ENCODE measurements at regions of chrX and their contacts with region 1.

Region 1: DNA sequence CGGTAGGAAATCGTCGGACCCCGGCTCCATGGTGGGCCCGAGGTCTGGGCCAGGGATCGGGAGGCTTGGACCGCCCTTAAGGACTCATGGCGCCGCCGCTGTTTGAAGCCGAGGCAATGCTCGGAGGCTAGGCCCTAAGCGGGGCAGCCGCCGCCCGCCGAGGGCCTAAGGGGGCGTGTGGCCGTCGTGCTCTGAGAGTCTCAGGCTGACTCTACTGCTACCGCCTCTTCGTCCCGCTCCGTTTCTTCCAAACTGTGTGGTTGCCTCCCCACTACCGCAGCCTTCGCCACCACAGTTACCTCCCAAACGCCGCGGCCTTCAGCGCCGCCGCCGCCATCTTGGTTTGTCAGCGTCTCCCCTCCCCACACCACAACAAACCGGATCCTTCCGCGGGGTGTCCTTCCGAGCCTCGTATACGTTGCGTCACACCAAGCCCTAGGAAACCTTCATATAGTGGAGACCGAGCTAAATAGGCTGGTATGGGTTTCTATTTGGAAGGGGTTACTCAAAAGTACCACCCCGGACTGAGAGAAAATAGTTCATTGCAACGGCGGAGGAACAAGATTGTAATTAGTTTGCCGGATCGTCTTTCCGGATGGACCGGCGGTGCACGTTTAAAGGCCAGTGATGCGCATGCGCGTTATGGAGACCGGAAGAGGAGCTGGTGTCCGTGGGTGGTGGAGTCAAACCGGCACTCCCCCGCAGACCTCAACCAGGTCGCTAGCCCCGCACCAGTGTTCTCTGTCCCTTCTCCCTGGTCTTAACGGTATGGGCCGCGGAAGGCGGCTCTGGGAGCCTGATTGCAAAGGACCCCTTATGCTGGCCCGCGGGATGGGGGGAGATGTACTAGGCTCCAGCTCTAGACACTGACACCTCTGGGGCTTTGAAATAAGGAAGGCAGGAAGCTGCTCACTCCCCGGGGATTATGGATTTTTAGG is at the start of gene KDM5C:
- DNase-seq: peak; percentile 79 to 84
- ATAC-seq: peak; percentile 74 to 78
- H3K4me3 ChIP-seq: peak within 1 kb of the TSS; percentile 71 to 98 (median 84)
- H3K27ac ChIP-seq: peak within 1 kb of the TSS; percentile 93 to 96 (median 95)
- H3K4me1 ChIP-seq: peaks cover 26 to 44% of the 10 kb centered on the region in 2 donors
- H3K27me3 ChIP-seq: no peaks in the 10 kb centered on the region
- CTCF ChIP-seq: peak in 1 of 5 experiments; percentile 20
- POLR2A ChIP-seq: peak; percentile 77 to 80
- total RNA-seq, gene KDM5C: 143 to 210 (median 147) TPM

Region 2: DNA sequence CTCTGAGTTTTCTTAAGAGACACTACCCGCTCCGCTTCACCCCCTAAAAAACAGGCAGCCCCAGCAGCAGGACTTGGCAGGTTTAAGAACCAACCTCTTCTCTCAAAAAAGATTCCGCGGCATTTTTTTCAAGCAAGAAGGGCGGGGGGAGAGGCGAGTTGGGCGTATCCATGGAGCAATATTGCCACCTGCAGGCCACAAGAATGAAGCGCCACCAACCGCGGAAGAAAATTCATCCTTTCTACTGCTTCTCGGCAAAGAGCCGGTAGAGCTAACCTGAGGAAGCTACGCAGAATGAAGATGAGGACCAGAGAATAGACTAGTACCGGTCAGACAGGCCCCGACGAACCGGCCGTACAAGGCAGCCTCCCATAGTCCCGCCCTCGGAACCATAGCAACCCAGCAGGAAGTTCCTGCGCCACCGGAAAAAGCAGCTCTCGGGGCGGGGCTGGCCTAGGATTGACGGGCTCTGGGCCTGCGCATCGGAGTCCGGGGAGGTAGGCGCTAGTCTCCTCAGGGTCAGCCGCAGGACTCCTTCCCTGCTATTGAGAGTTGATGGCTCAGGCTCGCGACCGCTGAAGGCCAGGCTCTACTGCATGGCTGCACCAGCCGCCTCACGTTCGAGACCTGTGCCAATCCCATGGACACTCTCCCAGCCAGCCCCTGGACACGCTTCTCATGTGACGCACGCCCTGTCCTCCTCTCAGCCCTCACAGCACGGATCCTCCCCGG is 963.5 kb before region 1 on chrX:
- in situ Hi-C with region 1: no loop called
- intact Hi-C with region 1: loop called (anchors 5 kb)
- DNase-seq: peak; percentile 83 to 87
- ATAC-seq: peak; percentile 98 to 99
- H3K4me3 ChIP-seq: peak overlapping the region; percentile 59 to 71 (median 66)
- H3K27ac ChIP-seq: peak overlapping the region; percentile 77 to 86 (median 86)
- H3K4me1 ChIP-seq: peaks cover 0 to 7% of the 10 kb centered on the region in 2 donors
- H3K27me3 ChIP-seq: peaks cover 0 to 7% (median 0%) of the 10 kb centered on the region in 3 donors
- CTCF ChIP-seq: peak; percentile 85 to 100 (median 97)
- POLR2A ChIP-seq: peak; percentile 27 to 32

Region 3: DNA sequence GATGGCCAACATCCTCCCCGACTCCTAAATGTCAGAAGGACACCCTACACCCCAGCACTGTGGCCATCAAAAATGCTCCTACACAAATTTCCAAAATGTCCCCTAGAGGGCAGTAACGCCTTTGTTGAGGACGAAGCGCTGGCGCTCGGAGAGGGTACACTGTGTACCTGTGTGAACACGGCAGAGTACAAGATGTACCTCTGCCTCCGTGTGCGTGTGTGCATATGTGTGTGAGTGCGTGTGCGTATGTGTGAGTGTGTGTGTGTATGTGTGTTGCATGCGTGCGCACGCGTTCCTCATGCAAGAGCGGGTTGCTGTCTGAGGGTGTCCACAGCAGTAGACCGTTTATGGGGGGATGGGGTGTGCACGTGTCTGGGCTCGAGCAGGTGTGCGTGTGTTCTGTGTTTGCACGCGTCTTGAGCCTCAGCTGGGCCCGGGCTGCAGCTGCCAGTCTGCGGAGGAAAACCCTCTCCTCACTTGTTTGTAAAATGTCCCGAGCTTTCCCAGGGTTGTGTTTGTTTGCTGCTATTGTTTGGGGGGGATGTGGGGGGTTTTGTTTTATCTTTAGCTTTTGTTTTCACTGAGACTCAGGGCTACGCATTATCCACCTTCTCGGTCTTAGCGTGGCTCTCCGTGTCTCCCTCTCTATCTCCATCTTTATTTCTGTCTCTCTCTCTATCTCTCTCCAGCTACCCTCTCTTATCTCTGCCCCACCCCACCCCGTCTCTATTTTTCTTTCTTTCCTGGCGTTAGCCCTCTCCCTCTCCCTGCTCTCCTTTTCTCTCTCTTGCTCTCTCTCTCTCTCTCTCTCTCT is 153.3 kb before region 1 on chrX:
- in situ Hi-C with region 1: loop called in 1 of 4 experiments (anchors 25 kb)
- intact Hi-C with region 1: loop called (anchors 2 kb)
- DNase-seq: peak; percentile 74 to 84
- ATAC-seq: peak; percentile 94 to 95
- H3K4me3 ChIP-seq: peak overlapping the region; percentile 32 to 44 (median 34)
- H3K27ac ChIP-seq: peak overlapping the region; percentile 82 to 86 (median 84)
- H3K4me1 ChIP-seq: peaks cover 0 to 10% of the 10 kb centered on the region in 2 donors
- H3K27me3 ChIP-seq: no peaks in the 10 kb centered on the region
- CTCF ChIP-seq: peak; percentile 65 to 81 (median 78)
- POLR2A ChIP-seq: peak; percentile 28 to 31

Region 4: DNA sequence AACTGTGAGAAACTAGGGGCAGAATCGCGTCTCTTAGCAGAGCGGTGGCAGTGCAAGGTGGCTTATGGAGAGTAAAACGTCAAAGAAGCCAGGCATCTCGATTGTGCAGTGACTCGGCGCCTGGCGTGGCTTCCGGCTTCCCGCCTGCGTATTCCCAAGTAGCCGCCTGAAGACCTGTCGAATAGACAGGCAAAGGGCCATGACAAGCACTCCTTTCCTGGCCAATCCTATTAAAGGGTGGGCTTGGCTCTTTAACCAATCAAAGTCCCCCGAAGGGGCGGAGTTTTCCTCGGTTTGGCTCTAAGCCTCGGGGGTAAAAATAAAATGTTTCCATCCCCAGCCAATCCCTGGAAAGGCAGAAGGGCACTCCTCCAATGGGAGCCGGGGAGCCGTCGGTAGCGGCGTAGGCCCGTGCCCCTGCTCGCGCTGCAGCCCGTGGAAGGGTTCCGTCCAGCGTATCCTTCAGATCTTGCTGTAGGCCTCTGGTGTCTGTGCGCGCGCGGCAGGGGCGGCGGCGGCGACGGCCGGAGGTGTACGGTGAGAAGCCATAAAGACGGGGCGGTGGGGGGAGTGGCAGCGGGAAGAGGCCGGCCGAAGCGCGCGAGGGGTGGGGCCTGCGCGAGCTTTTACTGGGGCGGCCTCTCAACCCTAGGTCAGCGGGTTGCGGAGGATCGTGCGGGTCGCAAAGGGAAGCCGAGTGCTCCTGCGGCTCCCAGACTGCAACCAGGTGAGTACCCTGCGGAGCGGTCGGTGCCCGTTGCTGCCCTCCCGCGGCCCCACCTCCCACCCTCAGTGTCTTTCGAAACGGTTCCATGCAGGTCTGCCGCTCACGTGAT is 131.2 kb before region 1 on chrX and contains the start of gene KANTR:
- in situ Hi-C with region 1: loop called in 2 of 4 experiments (anchors 10 to 25 kb)
- intact Hi-C with region 1: loop called (anchors 2 kb)
- DNase-seq: peak; percentile 82 to 91
- ATAC-seq: peak; percentile 94 to 96
- H3K4me3 ChIP-seq: peak within 1 kb of the TSS; percentile 63 to 76 (median 68)
- H3K27ac ChIP-seq: peak within 1 kb of the TSS; percentile 85 to 95 (median 92)
- H3K4me1 ChIP-seq: peaks cover 6 to 7% of the 10 kb centered on the region in 2 donors
- H3K27me3 ChIP-seq: no peaks in the 10 kb centered on the region
- CTCF ChIP-seq: no peak
- POLR2A ChIP-seq: peak; percentile 75 to 83
- total RNA-seq, gene KANTR: 3.0 to 13.0 (median 7.4) TPM

Region 5: GRCh38 chrX:53116101-53116500 is 109.0 kb before region 1 on chrX:
- in situ Hi-C with region 1: loop called in 1 of 4 experiments (anchors 25 kb)
- intact Hi-C with region 1: no loop called
- DNase-seq: peak in 1 of 2 donors; percentile 22
- ATAC-seq: peak; percentile 76 to 93
- H3K4me3 ChIP-seq: peak overlapping the region in 1 of 4 donors; percentile 29
- H3K27ac ChIP-seq: peak overlapping the region; percentile 57 to 80 (median 68)
- H3K4me1 ChIP-seq: peaks cover 0 to 6% of the 10 kb centered on the region in 2 donors
- H3K27me3 ChIP-seq: no peaks in the 10 kb centered on the region
- CTCF ChIP-seq: no peak
- POLR2A ChIP-seq: no peak

Region 6: GRCh38 chrX:53160297-53160984 is 64.7 kb before region 1 on chrX:
- in situ Hi-C with region 1: no loop called
- intact Hi-C with region 1: no loop called
- DNase-seq: peak; percentile 25 to 37
- ATAC-seq: peak; percentile 37 to 52
- H3K4me3 ChIP-seq: no peak overlapping the region
- H3K27ac ChIP-seq: peak overlapping the region; percentile 73 to 84 (median 78)
- H3K4me1 ChIP-seq: peaks cover 10 to 43% of the 10 kb centered on the region in 2 donors
- H3K27me3 ChIP-seq: no peaks in the 10 kb centered on the region
- CTCF ChIP-seq: no peak
- POLR2A ChIP-seq: no peak

Region 7: DNA sequence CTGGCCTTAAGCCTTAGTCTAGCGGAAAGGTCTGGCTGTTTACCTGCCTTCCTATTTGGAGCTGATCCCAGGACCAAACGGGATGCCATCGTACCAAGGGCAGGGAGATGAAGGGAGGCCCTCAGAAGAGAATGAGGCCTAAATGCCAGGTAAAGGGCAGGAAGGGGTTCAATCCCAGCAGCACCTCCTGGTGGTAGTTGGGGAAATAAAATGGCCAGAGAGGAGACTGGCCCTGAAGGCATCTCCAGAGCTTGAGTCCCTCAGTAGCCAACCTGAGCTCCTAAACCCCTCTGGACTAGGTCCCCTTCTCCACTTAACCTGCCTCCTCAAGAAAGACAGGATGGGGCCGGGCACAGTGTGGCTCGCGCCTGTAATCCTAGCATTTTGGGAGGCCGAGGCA is 53.8 kb before region 1 on chrX:
- in situ Hi-C with region 1: no loop called
- intact Hi-C with region 1: no loop called
- DNase-seq: no peak
- ATAC-seq: no peak
- H3K4me3 ChIP-seq: no peak overlapping the region
- H3K27ac ChIP-seq: no peak overlapping the region
- H3K4me1 ChIP-seq: no peaks in the 10 kb centered on the region
- H3K27me3 ChIP-seq: no peaks in the 10 kb centered on the region
- CTCF ChIP-seq: no peak
- POLR2A ChIP-seq: no peak

Region 8: GRCh38 chrX:53195401-53195800 is 29.7 kb before region 1 on chrX:
- in situ Hi-C with region 1: no loop called
- intact Hi-C with region 1: loop called (anchors 2 kb)
- DNase-seq: no peak
- ATAC-seq: no peak
- H3K4me3 ChIP-seq: no peak overlapping the region
- H3K27ac ChIP-seq: no peak overlapping the region
- H3K4me1 ChIP-seq: no peaks in the 10 kb centered on the region
- H3K27me3 ChIP-seq: no peaks in the 10 kb centered on the region
- CTCF ChIP-seq: no peak
- POLR2A ChIP-seq: no peak

Region 9: DNA sequence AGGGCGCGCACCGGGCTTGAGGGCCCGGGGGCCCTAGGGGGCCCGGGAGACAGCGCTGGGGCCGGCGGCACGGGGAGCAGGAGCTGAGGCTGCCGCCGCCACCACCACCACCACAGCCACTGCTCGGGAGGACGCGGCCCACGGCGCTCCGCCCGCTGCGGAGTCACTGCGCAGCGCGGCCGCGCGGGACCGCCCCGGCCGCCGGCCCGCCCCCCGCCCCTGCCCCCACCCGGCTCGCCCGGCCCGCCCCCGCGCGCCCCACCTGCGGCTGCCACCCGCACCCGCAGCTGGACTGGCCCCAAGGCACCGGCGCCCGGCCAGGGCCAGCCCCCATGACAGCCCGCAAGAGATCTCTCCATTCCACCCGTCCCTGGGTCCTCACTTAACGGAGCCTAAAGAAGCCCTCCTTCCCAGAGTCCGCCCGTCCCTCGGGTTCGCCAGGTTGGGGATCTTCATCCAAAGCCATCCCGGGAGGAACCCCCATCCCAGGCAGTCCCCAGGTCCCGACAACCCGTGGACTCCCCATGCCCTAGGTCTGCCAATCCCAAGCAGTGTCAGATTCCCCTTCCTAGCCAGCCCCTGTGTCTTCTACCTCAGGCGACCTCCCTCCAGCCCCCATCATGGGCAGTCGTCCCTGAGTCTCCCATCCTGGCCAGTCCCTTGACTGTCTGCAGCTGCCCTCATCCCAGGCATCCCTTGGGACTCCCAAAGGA is 96.3 kb after region 1 on chrX:
- in situ Hi-C with region 1: no loop called
- intact Hi-C with region 1: no loop called
- DNase-seq: no peak
- ATAC-seq: peak; percentile 60 to 62
- H3K4me3 ChIP-seq: peak overlapping the region; percentile 68 to 73 (median 70)
- H3K27ac ChIP-seq: peak overlapping the region; percentile 14 to 86 (median 57)
- H3K4me1 ChIP-seq: peaks cover 0 to 6% of the 10 kb centered on the region in 2 donors
- H3K27me3 ChIP-seq: peaks cover 0 to 40% (median 24%) of the 10 kb centered on the region in 3 donors
- CTCF ChIP-seq: no peak
- POLR2A ChIP-seq: peak; percentile 56 to 79

Region 10: DNA sequence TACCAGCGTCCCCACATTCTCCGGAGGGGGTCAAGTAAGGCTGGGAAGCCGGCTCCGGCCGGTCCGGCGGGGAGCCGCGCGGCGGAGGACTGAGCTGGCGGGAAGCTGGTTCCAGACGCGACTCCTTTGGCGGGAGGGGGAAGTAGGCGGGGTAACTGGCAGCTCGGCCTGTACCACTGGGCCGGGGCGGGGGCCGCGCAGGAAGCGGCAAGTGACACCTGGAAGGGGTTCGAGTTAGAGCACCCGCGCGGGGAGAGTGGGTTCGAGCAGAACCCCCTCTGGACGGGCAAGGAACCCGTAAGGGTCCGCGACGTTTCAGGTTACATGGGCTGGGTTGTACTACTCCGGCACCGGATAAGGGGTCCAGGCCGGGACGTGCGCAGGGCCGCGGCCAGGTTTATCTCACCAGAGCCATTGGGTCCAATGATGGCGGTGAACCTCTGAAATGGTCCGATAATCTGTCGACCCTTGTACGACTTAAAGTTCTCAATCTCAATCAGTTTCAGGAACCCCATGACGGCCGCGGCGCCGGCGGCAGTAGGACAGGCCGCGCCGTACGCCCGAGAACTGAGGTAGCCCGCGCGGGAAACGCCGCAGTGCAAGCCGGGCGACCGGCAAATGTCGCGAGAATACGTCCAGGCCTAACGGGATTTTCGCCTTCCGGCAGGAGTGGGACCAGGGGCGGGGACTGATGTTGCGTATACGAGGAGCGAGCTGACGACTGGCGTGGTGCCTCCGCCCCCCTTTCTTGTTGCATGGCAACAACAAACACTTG is 197.1 kb after region 1 on chrX and contains the start of gene SMC1A:
- in situ Hi-C with region 1: no loop called
- intact Hi-C with region 1: loop called (anchors 2 kb)
- DNase-seq: peak; percentile 90 to 94
- ATAC-seq: peak; percentile 95 to 96
- H3K4me3 ChIP-seq: peak within 1 kb of the TSS; percentile 65 to 89 (median 81)
- H3K27ac ChIP-seq: peak within 1 kb of the TSS; percentile 91 to 96 (median 94)
- H3K4me1 ChIP-seq: peaks cover 11 to 29% of the 10 kb centered on the region in 2 donors
- H3K27me3 ChIP-seq: no peaks in the 10 kb centered on the region
- CTCF ChIP-seq: peak in 1 of 5 experiments; percentile 10
- POLR2A ChIP-seq: peak; percentile 60 to 73
- total RNA-seq, gene SMC1A: 12.9 to 23.5 (median 17.1) TPM

Region 11: DNA sequence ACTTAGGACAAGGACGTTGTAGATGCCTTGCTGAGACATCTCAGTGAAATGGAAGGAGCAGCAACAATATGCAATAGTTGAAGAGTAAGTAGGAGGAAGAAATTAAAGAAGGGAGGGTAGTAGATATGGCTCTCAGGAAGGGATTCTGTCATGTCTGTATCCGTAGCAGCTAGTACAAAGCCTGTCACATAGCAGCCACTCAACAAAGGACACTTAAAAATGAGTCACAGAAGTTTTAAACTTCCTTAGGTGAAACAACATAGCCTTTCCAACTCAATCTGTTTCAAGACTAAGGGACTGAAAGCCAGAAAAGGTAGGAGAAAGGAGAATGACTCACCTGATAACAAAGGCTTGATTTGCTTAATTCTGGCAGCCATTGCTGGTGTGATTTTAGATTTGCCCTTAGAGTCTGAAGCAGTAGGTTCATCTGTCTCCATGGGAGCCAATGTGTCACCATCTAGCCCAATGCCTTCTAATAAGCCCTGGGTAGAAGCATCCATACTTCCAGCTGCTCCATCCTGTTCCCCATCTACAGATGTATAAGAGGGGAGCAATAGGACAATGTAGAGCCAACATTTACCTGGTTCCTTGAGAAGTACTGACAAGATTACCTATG is 374.8 kb after region 1 on chrX:
- in situ Hi-C with region 1: no loop called
- intact Hi-C with region 1: no loop called
- DNase-seq: no peak
- ATAC-seq: no peak
- H3K4me3 ChIP-seq: no peak overlapping the region
- H3K27ac ChIP-seq: no peak overlapping the region
- H3K4me1 ChIP-seq: no peaks in the 10 kb centered on the region
- H3K27me3 ChIP-seq: no peaks in the 10 kb centered on the region
- CTCF ChIP-seq: no peak
- POLR2A ChIP-seq: no peak